Activated T-helper 1 cell treated with anti-CD3 and anti-CD28 coated beads, Interleukin-12 subunit alpha, Interleukin-12 subunit beta, Interleukin-2, Interleukin-4 antibody, amounts not matched to agents 30 ng/mL and 10 ng/mL and 1 ng/mL, durations not matched to agents 14 hours and 24 hours and 36 hours (primary cell): ENCODE measurements at regions of chr7 and their contacts with region 1.

Region 1: DNA sequence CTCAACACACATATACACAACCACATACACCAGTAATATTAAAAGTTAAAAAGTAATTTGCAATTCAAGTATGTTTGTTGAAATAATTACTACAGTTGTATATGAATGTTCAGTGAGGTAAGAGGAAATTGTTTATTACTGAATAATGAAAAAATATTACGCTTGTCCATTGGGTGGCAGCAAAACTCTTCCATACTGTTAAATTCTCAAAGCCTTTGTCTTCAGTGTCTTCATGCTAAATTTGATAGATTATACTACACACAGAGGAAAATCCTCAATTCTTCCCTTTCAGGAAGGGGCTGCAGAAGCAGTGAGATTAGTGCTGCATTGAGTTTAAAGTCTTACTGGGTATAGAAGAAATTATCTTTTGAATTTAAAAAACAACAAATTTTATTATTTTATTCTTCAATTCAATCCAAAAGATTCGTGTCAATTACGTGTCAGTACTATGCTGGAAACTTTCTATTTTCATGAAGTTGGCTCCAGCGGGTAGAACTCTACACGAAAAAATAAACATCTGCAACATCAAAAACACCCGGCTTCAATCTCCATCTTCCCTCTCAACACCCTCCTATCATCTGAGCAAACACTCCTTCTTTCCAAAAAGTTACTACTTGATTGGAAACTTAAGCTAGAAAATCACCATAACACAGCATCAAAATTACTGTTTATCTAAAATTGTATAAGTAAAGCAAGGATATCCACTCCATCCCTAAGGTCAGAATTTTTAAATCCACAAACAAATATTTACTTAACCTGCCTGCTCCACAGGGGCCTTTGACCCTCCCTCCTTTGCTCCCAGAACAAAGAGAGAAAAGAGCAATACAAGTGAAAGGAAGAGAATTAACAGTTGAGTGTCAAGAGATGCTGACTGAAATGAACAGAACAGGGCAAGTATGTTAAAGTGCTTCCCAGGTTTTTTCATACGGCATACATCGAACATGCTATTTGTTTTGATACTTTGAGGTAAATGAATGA is 37.0 kb upstream of the TES start:
- DNase-seq: no peak
- H3K4me3 Mint-ChIP-seq: no peak overlapping the region
- H3K27ac Mint-ChIP-seq: no peak overlapping the region
- H3K4me1 Mint-ChIP-seq: no peaks in the 10 kb centered on the region
- H3K27me3 Mint-ChIP-seq: peaks cover 13% of the 10 kb centered on the region

Region 2: GRCh38 chr7:115952832-115953231 is 220.5 kb before region 1 on chr7:
- intact Hi-C with region 1: no loop called
- DNase-seq: no peak
- H3K4me3 Mint-ChIP-seq: no peak overlapping the region
- H3K27ac Mint-ChIP-seq: no peak overlapping the region
- H3K4me1 Mint-ChIP-seq: no peaks in the 10 kb centered on the region
- H3K27me3 Mint-ChIP-seq: no peaks in the 10 kb centered on the region

Region 3: DNA sequence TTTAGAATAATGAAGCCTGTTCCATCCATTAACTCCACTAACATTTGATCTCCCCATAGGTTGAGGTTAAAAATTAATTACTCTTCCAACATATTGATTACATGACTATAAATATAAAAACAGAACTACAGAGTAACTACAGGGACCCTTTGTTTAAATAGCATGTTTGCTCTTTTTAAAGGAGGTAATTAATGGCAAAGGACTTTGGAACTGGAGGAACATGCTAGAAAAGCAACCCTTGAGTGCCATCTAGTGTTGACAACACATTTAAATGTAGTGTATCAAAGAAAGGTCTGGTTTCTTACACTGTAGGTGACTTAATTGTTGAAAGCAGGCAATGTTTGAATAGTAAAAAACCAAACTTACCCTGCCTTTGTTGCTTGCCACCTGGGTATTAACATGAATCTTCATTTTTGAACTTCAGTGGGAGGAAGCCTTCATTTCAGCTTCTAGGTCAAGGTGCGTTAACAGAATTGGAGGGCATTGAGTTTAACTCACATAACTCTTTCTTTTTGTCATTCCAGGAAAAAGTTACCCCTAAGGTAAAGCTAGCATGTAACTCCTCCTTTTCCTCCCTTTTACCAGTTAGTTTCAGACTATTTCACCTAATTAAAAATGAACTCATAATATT is 636.4 kb after region 1 on chr7:
- intact Hi-C with region 1: loop called (anchors 1 kb)
- DNase-seq: peak; percentile 3
- H3K4me3 Mint-ChIP-seq: no peak overlapping the region
- H3K27ac Mint-ChIP-seq: no peak overlapping the region
- H3K4me1 Mint-ChIP-seq: no peaks in the 10 kb centered on the region
- H3K27me3 Mint-ChIP-seq: peaks cover 9% of the 10 kb centered on the region